ENCODE measurements at regions of chr3 and their contacts with region 1.

Region 1: GRCh38 chr3:71710906-71711494 is 14.2 kb downstream of the EIF4E3 start:
- DNase-seq: no peak
- ATAC-seq: peak; percentile 67
- H3K4me3 Mint-ChIP-seq: no peak overlapping the region
- H3K27ac Mint-ChIP-seq: no peak overlapping the region
- H3K4me1 Mint-ChIP-seq: peaks cover 69% of the 10 kb centered on the region
- H3K27me3 Mint-ChIP-seq: no peaks in the 10 kb centered on the region

Region 2: DNA sequence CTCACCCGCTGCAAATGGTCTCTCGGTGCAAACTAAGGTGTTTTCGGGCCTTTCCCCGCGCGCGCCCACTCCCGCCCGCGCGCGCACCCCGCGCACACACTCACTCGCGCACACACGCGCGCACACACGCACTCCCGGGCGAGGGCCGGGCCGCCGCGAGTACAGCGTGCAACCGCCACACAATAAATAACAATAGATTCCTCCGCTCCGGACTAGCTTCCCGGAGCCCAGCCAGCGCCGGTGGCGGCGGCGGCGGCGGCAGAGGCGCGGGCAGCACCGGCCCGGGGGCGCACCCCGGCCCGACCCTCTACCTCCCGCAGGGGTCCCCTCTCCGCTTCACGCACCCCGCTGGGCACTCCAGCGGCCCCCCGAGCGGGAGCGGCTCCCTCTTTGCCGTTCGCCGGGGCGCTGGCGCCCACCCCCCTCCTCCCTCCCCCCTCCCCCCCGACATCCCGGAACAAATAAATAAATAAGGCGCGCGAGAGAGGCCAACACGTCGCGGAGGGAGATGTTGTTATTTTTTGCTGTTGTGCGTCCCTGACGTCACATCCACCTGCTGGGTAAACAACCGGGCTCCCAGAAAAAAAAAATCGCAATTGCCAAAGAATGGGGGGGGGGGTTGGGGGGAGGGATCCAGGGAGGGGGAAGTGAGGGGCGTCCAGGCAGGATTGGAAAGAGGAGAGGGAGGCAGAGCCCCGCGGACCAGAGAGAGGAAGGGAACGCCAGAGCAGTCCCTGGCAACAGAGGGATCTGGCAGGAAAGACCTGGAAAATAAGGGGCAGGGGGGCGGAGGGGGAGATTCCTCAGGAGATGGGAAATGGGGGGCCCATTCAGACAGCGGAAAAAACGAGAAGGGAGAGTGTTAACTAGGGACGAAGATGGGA is 127.2 kb before region 1 on chr3 and contains the start of gene FOXP1:
- CTCF ChIA-PET with region 1: no interaction called
- POLR2A ChIA-PET with region 1: no interaction called
- DNase-seq: peak; percentile 72
- ATAC-seq: peak; percentile 43
- H3K4me3 Mint-ChIP-seq: peak within 1 kb of the TSS; percentile 85
- H3K27ac Mint-ChIP-seq: peak within 1 kb of the TSS; percentile 92
- H3K4me1 Mint-ChIP-seq: peaks cover 39% of the 10 kb centered on the region
- H3K27me3 Mint-ChIP-seq: no peaks in the 10 kb centered on the region
- total RNA-seq, gene FOXP1: 120 to 122 TPM

Region 3: GRCh38 chr3:71694358-71694999 is 16.5 kb before region 1 on chr3:
- CTCF ChIA-PET with region 1: interaction called, 17 read pairs
- POLR2A ChIA-PET with region 1: interaction called, 6 read pairs
- DNase-seq: no peak
- ATAC-seq: no peak
- H3K4me3 Mint-ChIP-seq: no peak overlapping the region
- H3K27ac Mint-ChIP-seq: no peak overlapping the region
- H3K4me1 Mint-ChIP-seq: peaks cover 3% of the 10 kb centered on the region
- H3K27me3 Mint-ChIP-seq: no peaks in the 10 kb centered on the region

Region 4: DNA sequence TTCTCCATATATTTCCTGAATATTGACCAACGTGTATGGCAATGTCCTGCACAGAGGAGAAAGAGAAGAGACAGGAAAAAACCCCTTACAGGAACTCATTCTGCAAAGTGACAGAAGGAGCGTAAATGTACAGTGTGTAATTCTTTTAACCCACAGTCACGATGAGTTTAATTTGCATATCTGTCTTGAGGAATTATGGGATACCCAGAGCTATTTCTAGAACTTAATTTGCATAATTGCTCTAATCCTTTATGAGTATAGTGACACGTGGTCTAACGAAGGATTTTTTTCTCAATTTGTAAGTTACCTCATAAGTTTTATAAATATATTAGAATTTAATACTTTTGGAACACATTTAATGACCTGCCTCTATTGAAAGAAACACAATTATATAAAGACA is 52.4 kb after region 1 on chr3:
- CTCF ChIA-PET with region 1: no interaction called
- POLR2A ChIA-PET with region 1: no interaction called
- DNase-seq: no peak
- ATAC-seq: no peak
- H3K4me3 Mint-ChIP-seq: no peak overlapping the region
- H3K27ac Mint-ChIP-seq: no peak overlapping the region
- H3K4me1 Mint-ChIP-seq: no peaks in the 10 kb centered on the region
- H3K27me3 Mint-ChIP-seq: peaks cover 19% of the 10 kb centered on the region

Region 5: DNA sequence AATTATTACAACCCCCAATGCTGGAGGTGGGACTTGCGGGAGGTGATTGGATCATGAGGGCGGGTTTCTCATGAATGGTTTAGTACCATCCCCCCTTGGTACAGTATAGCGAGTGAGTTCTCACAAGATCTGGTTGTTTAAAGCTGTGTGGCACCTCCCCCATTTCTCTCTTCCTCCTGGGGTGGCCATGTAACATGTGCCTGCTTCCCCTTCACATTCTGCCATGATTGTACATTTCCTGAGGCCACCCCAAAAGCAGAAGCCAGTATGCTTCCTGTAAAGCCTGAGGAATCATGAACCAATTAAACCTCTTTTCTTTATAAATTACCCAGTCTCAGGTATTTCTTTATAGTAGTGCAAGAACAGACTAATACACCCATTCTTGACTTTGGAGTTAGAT is 94.2 kb after region 1 on chr3:
- CTCF ChIA-PET with region 1: no interaction called
- POLR2A ChIA-PET with region 1: no interaction called
- DNase-seq: no peak
- ATAC-seq: no peak
- H3K4me3 Mint-ChIP-seq: no peak overlapping the region
- H3K27ac Mint-ChIP-seq: no peak overlapping the region
- H3K4me1 Mint-ChIP-seq: no peaks in the 10 kb centered on the region
- H3K27me3 Mint-ChIP-seq: peaks cover 5% of the 10 kb centered on the region

Region 6: DNA sequence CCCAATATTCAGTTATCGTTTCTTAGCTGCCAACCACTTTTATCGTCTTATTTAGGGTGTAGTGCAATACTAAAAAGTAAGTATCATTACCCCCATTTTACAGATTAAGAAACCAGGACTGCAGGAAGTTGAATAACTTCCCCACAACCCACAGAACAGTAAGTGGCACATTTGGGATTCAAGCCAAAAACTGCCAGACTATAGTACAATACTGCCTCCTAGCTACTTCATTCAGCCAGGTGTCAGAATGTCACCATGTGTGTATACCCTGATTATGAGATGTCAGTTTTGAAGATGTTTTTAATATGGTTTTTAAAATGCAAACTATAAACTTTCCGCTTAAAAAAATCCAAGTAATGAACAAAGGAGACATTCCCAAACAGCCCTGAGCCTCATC is 148.1 kb after region 1 on chr3:
- CTCF ChIA-PET with region 1: interaction called, 28 read pairs
- POLR2A ChIA-PET with region 1: interaction called, 4 read pairs
- DNase-seq: peak; percentile 28
- ATAC-seq: peak; percentile 57
- H3K4me3 Mint-ChIP-seq: no peak overlapping the region
- H3K27ac Mint-ChIP-seq: no peak overlapping the region
- H3K4me1 Mint-ChIP-seq: peaks cover 6% of the 10 kb centered on the region
- H3K27me3 Mint-ChIP-seq: peaks cover 15% of the 10 kb centered on the region